ENCODE measurements at regions of chr5 and their contacts with region 1.

Region 1: GRCh38 chr5:147911427-147911826 is 5.1 kb upstream of the C5orf46 start:
- DNase-seq: no peak
- H3K4me3 ChIP-seq: no peak overlapping the region
- H3K27ac ChIP-seq: no peak overlapping the region
- H3K4me1 ChIP-seq: peaks cover 6% of the 10 kb centered on the region
- H3K27me3 ChIP-seq: no peaks in the 10 kb centered on the region
- CTCF ChIP-seq: no peak
- POLR2A ChIP-seq: no peak

Region 2: GRCh38 chr5:147892821-147893232 is 18.6 kb before region 1 on chr5:
- CTCF ChIA-PET with region 1: no interaction called
- POLR2A ChIA-PET with region 1: no interaction called
- dilution Hi-C with region 1: no loop called
- intact Hi-C with region 1: loop called (anchors 1 kb)
- DNase-seq: peak; percentile 61
- H3K4me3 ChIP-seq: no peak overlapping the region
- H3K27ac ChIP-seq: peak overlapping the region; percentile 81
- H3K4me1 ChIP-seq: peaks cover 26% of the 10 kb centered on the region
- H3K27me3 ChIP-seq: no peaks in the 10 kb centered on the region
- CTCF ChIP-seq: no peak
- POLR2A ChIP-seq: no peak

Region 3: DNA sequence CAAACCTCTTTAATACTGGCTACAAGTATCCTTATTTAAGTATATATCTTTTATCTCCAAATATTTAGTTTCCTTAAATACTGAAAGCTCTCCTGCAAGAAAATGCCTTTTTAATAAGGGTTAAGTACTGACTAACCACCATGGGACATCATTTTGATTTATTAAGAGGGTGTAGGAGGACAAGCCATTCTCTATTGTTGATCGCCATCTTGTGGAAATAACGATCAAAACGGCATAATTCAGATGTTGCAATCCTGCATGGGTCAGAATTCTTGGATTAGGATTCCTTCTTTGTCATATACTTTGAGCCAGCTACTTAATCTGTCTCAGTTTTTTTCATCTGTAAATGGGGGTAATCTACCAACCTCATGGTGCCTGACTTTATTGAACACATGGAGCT is 23.6 kb after region 1 on chr5:
- CTCF ChIA-PET with region 1: interaction called, 6 read pairs
- POLR2A ChIA-PET with region 1: no interaction called
- dilution Hi-C with region 1: no loop called
- intact Hi-C with region 1: loop called (anchors 2 kb)
- DNase-seq: peak; percentile 77
- H3K4me3 ChIP-seq: no peak overlapping the region
- H3K27ac ChIP-seq: no peak overlapping the region
- H3K4me1 ChIP-seq: no peaks in the 10 kb centered on the region
- H3K27me3 ChIP-seq: no peaks in the 10 kb centered on the region
- CTCF ChIP-seq: peak; percentile 33 to 34
- POLR2A ChIP-seq: no peak